Esophagus squamous epithelium (tissue), 5 donors: ENCODE measurements at regions of chr1 and their contacts with region 1.

Region 1: GRCh38 chr1:33367485-33368405 is 46.8 kb upstream of the A3GALT2 start:
- DNase-seq: peak; percentile 20
- H3K4me3 ChIP-seq: no peak overlapping the region
- H3K27ac ChIP-seq: peak overlapping the region in 3 of 4 donors; percentile 75 to 85 (median 78)
- H3K4me1 ChIP-seq: peaks cover 15 to 74% (median 40%) of the 10 kb centered on the region in 3 donors
- H3K27me3 ChIP-seq: no peaks in the 10 kb centered on the region
- CTCF ChIP-seq: peak; percentile 92 to 98 (median 96)
- POLR2A ChIP-seq: no peak

Region 2: DNA sequence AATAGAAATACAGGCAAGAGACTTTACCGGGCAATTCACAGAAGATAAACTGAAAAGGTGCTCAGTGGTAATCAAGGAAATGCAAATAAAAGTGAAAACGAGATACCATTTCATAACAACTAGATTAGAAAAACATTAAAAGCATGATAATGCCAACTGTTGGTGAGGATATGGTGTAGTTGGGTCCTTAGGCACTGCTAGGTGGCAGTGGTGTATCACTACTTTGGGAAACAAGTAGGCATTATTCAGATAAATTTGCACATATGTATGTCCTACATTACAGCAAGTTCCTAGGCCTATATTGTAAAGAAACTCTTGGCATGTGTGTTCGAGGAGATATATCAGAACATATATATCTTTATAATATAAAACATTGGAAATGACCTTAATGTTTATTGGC is 255.8 kb before region 1 on chr1:
- intact Hi-C with region 1: loop called (anchors 10 kb)
- DNase-seq: no peak
- H3K4me3 ChIP-seq: no peak overlapping the region
- H3K27ac ChIP-seq: no peak overlapping the region
- H3K4me1 ChIP-seq: no peaks in the 10 kb centered on the region
- H3K27me3 ChIP-seq: no peaks in the 10 kb centered on the region
- CTCF ChIP-seq: peak in 5 of 6 experiments; percentile 22 to 57 (median 33)
- POLR2A ChIP-seq: no peak

Region 3: GRCh38 chr1:33295450-33296081 is 72.2 kb before region 1 on chr1:
- intact Hi-C with region 1: loop called (anchors 5 kb)
- DNase-seq: no peak
- H3K4me3 ChIP-seq: no peak overlapping the region
- H3K27ac ChIP-seq: peak overlapping the region; percentile 31 to 72 (median 64)
- H3K4me1 ChIP-seq: peaks cover 0 to 56% (median 18%) of the 10 kb centered on the region in 3 donors
- H3K27me3 ChIP-seq: no peaks in the 10 kb centered on the region
- CTCF ChIP-seq: peak; percentile 86 to 100 (median 98)
- POLR2A ChIP-seq: no peak